ENCODE measurements at regions of chr13 and their contacts with region 1.

Region 1: GRCh38 chr13:30673669-30674521 is 56.2 kb downstream of the USPL1 start:
- DNase-seq: peak; percentile 97
- ATAC-seq: peak; percentile 92
- H3K4me3 ChIP-seq: peak overlapping the region; percentile 52 to 73 (median 65)
- H3K4me3 Mint-ChIP-seq: peak overlapping the region; percentile 97
- H3K27ac ChIP-seq: peak overlapping the region; percentile 47 to 57
- H3K27ac Mint-ChIP-seq: peak overlapping the region; percentile 99
- H3K4me1 ChIP-seq: peaks cover 8 to 19% of the 10 kb centered on the region in 2 donors
- H3K4me1 Mint-ChIP-seq: peaks cover 30% of the 10 kb centered on the region
- H3K27me3 ChIP-seq: no peaks in the 10 kb centered on the region
- H3K27me3 Mint-ChIP-seq: no peaks in the 10 kb centered on the region
- CTCF ChIP-seq: peak; percentile 73

Region 2: GRCh38 chr13:30276178-30276577 is 397.7 kb before region 1 on chr13:
- CTCF ChIA-PET with region 1: no interaction called
- POLR2A ChIA-PET with region 1: interaction called, 12 read pairs
- intact Hi-C with region 1: no loop called
- DNase-seq: peak; percentile 37
- ATAC-seq: peak; percentile 54
- H3K4me3 ChIP-seq: no peak overlapping the region
- H3K4me3 Mint-ChIP-seq: no peak overlapping the region
- H3K27ac ChIP-seq: no peak overlapping the region
- H3K27ac Mint-ChIP-seq: no peak overlapping the region
- H3K4me1 ChIP-seq: peaks cover 3 to 6% of the 10 kb centered on the region in 2 donors
- H3K4me1 Mint-ChIP-seq: peaks cover 25% of the 10 kb centered on the region
- H3K27me3 ChIP-seq: no peaks in the 10 kb centered on the region
- H3K27me3 Mint-ChIP-seq: no peaks in the 10 kb centered on the region
- CTCF ChIP-seq: no peak

Region 3: DNA sequence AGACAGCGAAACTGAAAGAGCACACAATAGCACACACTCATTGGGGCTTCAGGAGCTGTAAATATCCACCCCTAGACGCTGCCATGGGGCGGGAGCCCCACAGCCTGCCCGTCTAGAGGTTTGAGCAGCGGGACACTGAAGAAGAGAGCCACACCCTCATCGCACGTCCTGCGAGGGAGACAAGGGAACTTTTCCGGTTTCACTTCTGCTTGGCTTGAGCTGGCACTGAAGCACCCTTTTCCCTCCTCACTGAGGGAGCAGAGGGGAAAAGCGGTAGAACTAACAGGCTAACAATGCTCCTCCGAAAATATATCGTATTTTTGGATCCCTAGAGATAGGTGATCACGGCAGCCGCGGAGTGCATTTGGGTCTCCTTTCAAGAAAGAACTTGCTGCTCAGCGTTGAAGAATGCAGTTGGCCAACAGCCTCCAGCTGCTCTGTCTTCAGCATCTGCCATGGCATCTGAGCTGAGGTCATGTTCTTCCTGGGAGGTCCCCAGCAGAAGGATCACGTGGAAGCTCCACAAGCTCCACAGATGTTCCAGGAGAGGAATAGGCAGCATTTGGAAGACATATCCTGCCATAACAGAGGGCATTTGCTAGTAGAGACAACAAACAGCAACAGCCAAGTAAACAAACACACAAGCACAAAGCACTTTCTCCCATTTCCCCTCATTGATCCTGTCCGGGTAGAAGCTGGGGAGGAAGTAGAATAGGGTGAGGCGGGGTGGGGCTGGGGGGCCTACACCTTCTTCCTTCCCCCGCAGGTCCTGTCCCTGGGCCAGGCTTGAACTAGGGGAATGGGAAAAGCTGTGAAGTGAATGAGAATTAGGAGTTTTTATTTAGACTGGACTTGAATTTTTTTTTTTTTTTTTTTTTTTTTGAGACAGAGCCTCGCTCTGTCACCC is 16.6 kb after region 1 on chr13:
- CTCF ChIA-PET with region 1: no interaction called
- POLR2A ChIA-PET with region 1: interaction called, 8 read pairs
- intact Hi-C with region 1: loop called (anchors 1 kb)
- DNase-seq: peak; percentile 63
- ATAC-seq: peak; percentile 90
- H3K4me3 ChIP-seq: peak overlapping the region in 4 of 5 experiments; percentile 20 to 55 (median 31)
- H3K4me3 Mint-ChIP-seq: peak overlapping the region; percentile 84
- H3K27ac ChIP-seq: peak overlapping the region in 1 of 2 donors; percentile 10
- H3K27ac Mint-ChIP-seq: peak overlapping the region; percentile 79
- H3K4me1 ChIP-seq: peaks cover 16 to 17% of the 10 kb centered on the region in 2 donors
- H3K4me1 Mint-ChIP-seq: peaks cover 20% of the 10 kb centered on the region
- H3K27me3 ChIP-seq: no peaks in the 10 kb centered on the region
- H3K27me3 Mint-ChIP-seq: peaks cover 3% of the 10 kb centered on the region
- CTCF ChIP-seq: no peak

Region 4: GRCh38 chr13:30702006-30702405 is 28.1 kb after region 1 on chr13:
- CTCF ChIA-PET with region 1: no interaction called
- POLR2A ChIA-PET with region 1: no interaction called
- intact Hi-C with region 1: no loop called
- DNase-seq: no peak
- ATAC-seq: no peak
- H3K4me3 ChIP-seq: no peak overlapping the region
- H3K4me3 Mint-ChIP-seq: no peak overlapping the region
- H3K27ac ChIP-seq: no peak overlapping the region
- H3K27ac Mint-ChIP-seq: no peak overlapping the region
- H3K4me1 ChIP-seq: peaks cover 2 to 5% of the 10 kb centered on the region in 2 donors
- H3K4me1 Mint-ChIP-seq: peaks cover 11% of the 10 kb centered on the region
- H3K27me3 ChIP-seq: no peaks in the 10 kb centered on the region
- H3K27me3 Mint-ChIP-seq: peaks cover 8% of the 10 kb centered on the region
- CTCF ChIP-seq: no peak